ENCODE measurements at regions of chr2 and their contacts with region 1.

Region 1: DNA sequence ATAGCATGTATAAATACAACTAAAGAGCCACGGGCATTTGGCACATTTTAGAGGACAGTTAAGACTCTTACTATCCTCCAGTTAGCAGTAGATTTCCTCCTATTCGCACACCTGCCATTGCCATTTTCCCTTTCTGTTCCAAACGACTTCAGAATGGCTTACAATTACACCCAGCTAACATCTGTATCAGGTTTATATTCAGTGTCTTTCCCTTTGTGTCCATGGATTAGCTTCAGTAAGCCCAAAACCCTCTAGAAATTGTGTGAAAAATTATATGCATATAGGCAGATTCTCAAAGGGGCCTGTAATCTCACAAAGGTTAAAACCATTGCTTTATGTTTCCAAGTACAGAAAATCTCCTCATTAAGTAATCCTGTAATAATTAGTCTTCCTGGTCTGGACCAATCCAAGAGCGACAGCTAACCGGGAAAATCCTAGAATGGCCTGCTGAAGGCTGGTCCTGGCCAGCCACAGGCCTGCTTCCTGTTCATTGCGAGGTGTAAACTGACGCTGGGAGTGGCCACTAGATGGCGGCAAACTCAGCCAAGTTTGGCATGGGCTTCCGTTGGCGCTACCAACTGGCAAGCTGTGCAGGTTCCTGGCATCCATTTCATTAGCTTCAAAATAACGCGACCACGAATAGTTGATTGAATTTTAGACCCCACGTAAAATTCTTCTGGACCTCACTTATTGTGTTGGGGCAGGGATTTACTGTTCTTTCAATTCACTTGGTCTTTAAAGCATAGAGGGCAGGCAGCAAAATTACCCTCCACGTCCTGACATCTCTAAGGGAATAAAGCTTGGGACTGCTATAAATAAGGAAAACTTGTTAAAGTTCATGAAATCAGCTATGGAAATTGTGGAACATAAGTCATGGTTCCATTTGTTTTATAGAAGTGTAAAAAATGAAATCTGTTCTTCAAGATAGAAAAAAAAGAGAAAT is 17.1 kb downstream of the ARHGAP25 start:
- DNase-seq: peak; percentile 77 to 96 (median 91)
- ATAC-seq: peak; percentile 98
- H3K4me3 ChIP-seq: no peak overlapping the region
- H3K27ac ChIP-seq: peak overlapping the region in 1 of 2 donors; percentile 45
- H3K4me1 ChIP-seq: peaks cover 16 to 74% of the 10 kb centered on the region in 2 donors
- H3K27me3 ChIP-seq: no peaks in the 10 kb centered on the region
- CTCF ChIP-seq: peak; percentile 95 to 96

Region 2: DNA sequence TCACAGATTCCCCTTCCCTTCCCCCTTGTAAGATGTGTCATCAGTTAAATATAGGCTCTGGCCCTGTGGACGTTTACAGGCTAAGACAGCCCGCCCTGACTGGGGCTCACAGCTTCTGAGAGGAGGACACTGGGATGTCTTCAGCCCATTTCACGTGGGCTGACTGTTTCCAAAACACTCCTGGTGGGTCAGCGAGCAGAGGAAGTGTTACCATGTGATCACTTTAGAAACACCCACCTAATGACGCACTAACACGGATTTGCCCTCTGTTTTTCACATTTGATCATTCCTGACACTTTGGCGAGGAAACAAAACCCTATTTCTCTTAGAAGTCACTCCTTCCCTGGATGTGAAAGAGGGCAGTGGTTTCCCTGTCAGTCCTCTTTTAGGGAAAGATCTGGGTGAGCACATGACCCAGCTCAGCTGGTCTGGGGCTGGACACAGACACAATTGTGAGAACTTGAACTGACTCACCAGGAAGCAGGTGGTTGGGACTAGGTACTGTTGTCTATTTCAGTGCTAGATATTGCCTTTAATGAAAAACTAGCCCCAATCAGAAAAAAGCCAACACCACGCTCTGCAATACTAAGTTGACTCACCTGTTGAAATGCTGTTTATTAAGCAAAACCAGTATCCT is 80.7 kb after region 1 on chr2:
- intact Hi-C with region 1: loop called in 1 of 2 experiments (anchors 10 kb)
- DNase-seq: peak in 2 of 4 donors; percentile 33 to 85
- ATAC-seq: peak; percentile 70
- H3K4me3 ChIP-seq: no peak overlapping the region
- H3K27ac ChIP-seq: peak overlapping the region; percentile 72 to 90
- H3K4me1 ChIP-seq: peaks cover 18 to 95% of the 10 kb centered on the region in 2 donors
- H3K27me3 ChIP-seq: no peaks in the 10 kb centered on the region
- CTCF ChIP-seq: no peak